Sciatic nerve (tissue), 2 donors: ENCODE measurements at regions of chr21 and their contacts with region 1.

Region 1: GRCh38 chr21:29164325-29164942 is 34.0 kb downstream of the MAP3K7CL start:
- DNase-seq: no peak
- ATAC-seq: peak; percentile 92

Region 2: GRCh38 chr21:28971171-28971570 is 193.3 kb before region 1 on chr21:
- intact Hi-C with region 1: no loop called
- DNase-seq: no peak
- ATAC-seq: no peak

Region 3: DNA sequence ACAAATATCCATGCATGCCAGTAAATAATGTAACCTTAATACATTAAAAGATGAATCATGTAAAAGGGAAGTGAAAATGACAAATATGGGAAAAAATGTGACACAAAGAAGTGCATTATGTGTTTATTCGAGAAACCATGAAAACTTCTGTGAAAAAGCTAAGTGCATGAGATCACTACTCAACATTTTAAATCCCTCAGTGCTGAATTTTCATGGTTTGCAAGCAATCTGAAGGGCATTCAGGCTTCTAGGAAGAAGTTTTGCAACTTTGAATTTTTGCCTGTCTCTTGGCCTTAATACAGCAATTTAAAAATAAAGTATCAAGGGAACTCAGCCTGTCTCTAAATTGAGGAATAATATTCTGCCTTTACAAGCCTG is 44.2 kb after region 1 on chr21:
- intact Hi-C with region 1: no loop called
- DNase-seq: no peak
- ATAC-seq: peak; percentile 89

Region 4: GRCh38 chr21:29372063-29372802 is 207.8 kb after region 1 on chr21:
- intact Hi-C with region 1: loop called (anchors 5 kb)
- DNase-seq: peak; percentile 60
- ATAC-seq: peak; percentile 92